Heart right ventricle (tissue), 16 donors: ENCODE measurements at regions of chr16 and their contacts with region 1.

Region 1: GRCh38 chr16:49189286-49189685 is 92.4 kb downstream of the CBLN1 start:
- DNase-seq: no peak
- ATAC-seq: no peak
- H3K4me3 ChIP-seq: no peak overlapping the region
- H3K27ac ChIP-seq: no peak overlapping the region
- H3K4me1 ChIP-seq: no peaks in the 10 kb centered on the region
- H3K27me3 ChIP-seq: peaks cover 0 to 15% (median 0%) of the 10 kb centered on the region in 7 donors
- CTCF ChIP-seq: no peak

Region 2: GRCh38 chr16:48911700-48912099 is 277.6 kb before region 1 on chr16:
- intact Hi-C with region 1: loop called in 4 of 10 experiments (anchors 5 to 10 kb)
- DNase-seq: no peak
- ATAC-seq: no peak
- H3K4me3 ChIP-seq: no peak overlapping the region
- H3K27ac ChIP-seq: no peak overlapping the region
- H3K4me1 ChIP-seq: peaks cover 0 to 6% (median 0%) of the 10 kb centered on the region in 9 donors
- H3K27me3 ChIP-seq: peaks cover 0 to 19% (median 2%) of the 10 kb centered on the region in 7 donors
- CTCF ChIP-seq: peak in 7 of 9 donors; percentile 8 to 53 (median 36)

Region 3: GRCh38 chr16:48949636-48950035 is 239.7 kb before region 1 on chr16:
- intact Hi-C with region 1: no loop called
- DNase-seq: no peak
- ATAC-seq: no peak
- H3K4me3 ChIP-seq: no peak overlapping the region
- H3K27ac ChIP-seq: no peak overlapping the region
- H3K4me1 ChIP-seq: peaks cover 0 to 22% (median 8%) of the 10 kb centered on the region in 9 donors
- H3K27me3 ChIP-seq: no peaks in the 10 kb centered on the region
- CTCF ChIP-seq: no peak

Region 4: GRCh38 chr16:50360033-50360778 is 1170.9 kb after region 1 on chr16:
- intact Hi-C with region 1: no loop called
- DNase-seq: no peak
- ATAC-seq: peak in 2 of 8 donors; percentile 52 to 60
- H3K4me3 ChIP-seq: no peak overlapping the region
- H3K27ac ChIP-seq: peak overlapping the region in 1 of 10 donors; percentile 23
- H3K4me1 ChIP-seq: peaks cover 5 to 32% (median 21%) of the 10 kb centered on the region in 9 donors
- H3K27me3 ChIP-seq: no peaks in the 10 kb centered on the region
- CTCF ChIP-seq: no peak